Activated B cell treated with CpG ODN at 0.5 μM for 24 hours (primary cell): ENCODE measurements at regions of chr4 and their contacts with region 1.

Region 1: GRCh38 chr4:112636688-112637551 is at the starts of genes LARP7 and ZGRF1:
- DNase-seq: peak; percentile 91
- ATAC-seq: peak; percentile 89
- H3K4me3 Mint-ChIP-seq: no peak within 1 kb of the TSS
- H3K27ac Mint-ChIP-seq: no peak within 1 kb of the TSS
- H3K4me1 Mint-ChIP-seq: peaks cover 22% of the 10 kb centered on the region
- H3K27me3 Mint-ChIP-seq: no peaks in the 10 kb centered on the region
- CTCF ChIP-seq: peak; percentile 67
- total RNA-seq, gene LARP7: 56.9 and 57.8 TPM in 2 replicates
- total RNA-seq, gene ZGRF1: 12.3 and 13.7 TPM in 2 replicates

Region 2: DNA sequence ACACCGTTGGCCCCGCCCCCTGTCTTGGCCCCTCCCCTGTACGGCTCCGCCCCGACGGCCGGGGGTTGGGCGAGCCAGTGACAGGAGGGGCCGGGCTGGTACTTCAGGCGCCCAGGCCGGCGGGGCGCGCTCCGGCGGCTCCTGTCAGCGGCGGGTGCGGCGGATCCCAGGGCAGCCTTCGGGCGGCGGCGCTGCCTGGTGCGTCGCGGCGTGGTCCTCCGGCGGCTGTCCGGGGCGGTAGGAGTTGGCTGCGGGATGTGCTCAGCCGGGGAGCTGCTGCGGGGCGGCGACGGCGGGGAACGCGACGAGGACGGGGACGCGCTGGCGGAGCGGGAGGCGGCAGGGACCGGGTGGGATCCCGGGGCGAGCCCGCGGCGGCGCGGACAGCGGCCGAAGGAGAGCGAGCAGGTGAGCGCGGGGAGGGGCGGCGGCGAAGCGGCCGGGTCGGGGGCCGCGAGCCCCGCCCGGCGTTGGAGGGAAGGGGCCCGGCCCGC is 491.5 kb before region 1 on chr4 and contains the start of gene FAM241A:
- CTCF ChIA-PET with region 1: no interaction called
- POLR2A ChIA-PET with region 1: no interaction called
- intact Hi-C with region 1: loop called (anchors 1 kb)
- DNase-seq: peak; percentile 86
- ATAC-seq: peak; percentile 97
- H3K4me3 Mint-ChIP-seq: peak within 1 kb of the TSS; percentile 97
- H3K27ac Mint-ChIP-seq: peak within 1 kb of the TSS; percentile 80
- H3K4me1 Mint-ChIP-seq: peaks cover 19% of the 10 kb centered on the region
- H3K27me3 Mint-ChIP-seq: peaks cover 5% of the 10 kb centered on the region
- CTCF ChIP-seq: no peak
- total RNA-seq, gene FAM241A: 1.1 and 1.5 TPM in 2 replicates

Region 3: DNA sequence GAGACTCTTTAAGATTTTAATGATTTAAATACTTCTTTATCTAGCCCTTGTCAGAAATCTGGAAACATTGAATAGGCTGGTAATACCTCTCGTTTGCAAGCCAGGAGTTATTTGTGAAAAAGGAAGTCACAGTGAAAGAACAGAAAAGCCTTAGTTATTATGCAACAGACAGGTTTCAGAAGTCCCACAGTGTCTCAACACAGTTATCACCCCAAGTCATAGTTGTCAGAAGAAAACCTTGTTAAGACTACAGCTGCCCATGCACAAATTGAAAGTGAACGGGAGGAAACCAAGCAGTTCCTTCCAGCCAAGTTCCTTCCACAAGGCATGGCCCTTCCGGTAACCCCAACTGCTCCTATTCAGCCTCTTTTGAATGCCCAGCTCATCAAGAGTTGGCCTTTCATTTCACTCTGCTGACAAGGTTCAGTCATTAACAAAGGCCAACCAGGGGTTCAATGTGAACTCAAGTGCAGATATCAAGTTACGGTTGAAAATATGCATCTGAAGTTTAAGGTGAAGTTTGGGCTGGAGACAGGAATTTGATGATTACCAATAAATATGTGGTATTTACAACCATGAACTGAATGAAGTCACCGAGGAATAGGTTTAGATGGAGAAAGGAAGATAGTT is 324.2 kb before region 1 on chr4:
- CTCF ChIA-PET with region 1: no interaction called
- POLR2A ChIA-PET with region 1: no interaction called
- intact Hi-C with region 1: loop called (anchors 1 kb)
- DNase-seq: no peak
- ATAC-seq: peak; percentile 87
- H3K4me3 Mint-ChIP-seq: no peak overlapping the region
- H3K27ac Mint-ChIP-seq: no peak overlapping the region
- H3K4me1 Mint-ChIP-seq: peaks cover 19% of the 10 kb centered on the region
- H3K27me3 Mint-ChIP-seq: no peaks in the 10 kb centered on the region
- CTCF ChIP-seq: no peak

Region 4: GRCh38 chr4:112735474-112735951 is 98.6 kb after region 1 on chr4:
- CTCF ChIA-PET with region 1: no interaction called
- POLR2A ChIA-PET with region 1: no interaction called
- intact Hi-C with region 1: loop called (anchors 1 kb)
- DNase-seq: no peak
- ATAC-seq: peak; percentile 67
- H3K4me3 Mint-ChIP-seq: no peak overlapping the region
- H3K27ac Mint-ChIP-seq: peak overlapping the region; percentile 21
- H3K4me1 Mint-ChIP-seq: peaks cover 15% of the 10 kb centered on the region
- H3K27me3 Mint-ChIP-seq: no peaks in the 10 kb centered on the region
- CTCF ChIP-seq: no peak

Region 5: GRCh38 chr4:112817933-112818593 is 181.1 kb after region 1 on chr4:
- CTCF ChIA-PET with region 1: no interaction called
- POLR2A ChIA-PET with region 1: no interaction called
- intact Hi-C with region 1: loop called (anchors 2 kb)
- DNase-seq: peak; percentile 30
- ATAC-seq: peak; percentile 94
- H3K4me3 Mint-ChIP-seq: peak overlapping the region; percentile 88
- H3K27ac Mint-ChIP-seq: peak overlapping the region; percentile 83
- H3K4me1 Mint-ChIP-seq: peaks cover 15% of the 10 kb centered on the region
- H3K27me3 Mint-ChIP-seq: peaks cover 9% of the 10 kb centered on the region
- CTCF ChIP-seq: no peak

Region 6: DNA sequence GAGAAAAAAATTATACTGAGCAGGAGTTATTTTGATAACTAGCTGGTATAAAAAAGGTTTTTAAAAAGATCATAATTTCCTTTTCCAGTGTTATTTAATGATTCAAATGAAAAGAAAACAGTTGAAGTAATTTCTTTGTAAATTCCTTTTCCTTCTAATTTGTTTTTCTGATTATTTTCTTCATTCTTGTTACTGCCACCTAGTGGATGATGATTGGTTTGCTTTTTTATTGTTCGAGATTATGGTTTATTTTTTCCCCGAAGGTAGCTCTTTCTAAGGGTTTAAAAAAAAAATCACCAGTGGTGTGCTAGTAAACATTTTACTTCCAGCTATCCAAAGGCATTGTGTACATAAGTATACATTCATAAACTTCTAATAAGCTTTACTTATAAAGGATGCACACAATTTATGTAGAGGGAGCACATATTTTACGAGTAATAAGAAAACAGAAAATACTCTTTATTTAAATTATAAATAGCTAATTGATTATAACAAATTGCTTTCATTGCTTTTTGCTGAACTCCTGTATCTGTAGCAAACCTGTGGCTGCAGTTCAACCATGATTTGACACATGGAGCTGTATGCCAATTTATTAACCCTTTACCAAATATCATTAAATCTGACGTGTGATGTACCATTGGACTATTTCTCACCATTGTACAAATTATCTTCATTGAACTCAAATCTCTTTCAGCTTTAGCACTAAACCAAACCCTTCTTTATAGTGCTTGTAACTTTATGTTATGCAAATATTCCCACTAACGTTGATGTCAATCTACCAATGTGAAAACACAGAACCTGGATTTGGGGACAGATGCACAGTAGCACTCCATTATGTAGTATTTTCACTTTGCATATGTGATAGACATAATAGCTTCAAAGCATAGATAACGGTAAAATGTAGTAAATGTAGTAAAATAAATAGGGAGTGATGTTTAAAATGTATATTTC is 314.7 kb after region 1 on chr4:
- CTCF ChIA-PET with region 1: no interaction called
- POLR2A ChIA-PET with region 1: no interaction called
- intact Hi-C with region 1: loop called (anchors 1 kb)
- DNase-seq: no peak
- ATAC-seq: no peak
- H3K4me3 Mint-ChIP-seq: no peak overlapping the region
- H3K27ac Mint-ChIP-seq: no peak overlapping the region
- H3K4me1 Mint-ChIP-seq: peaks cover 2% of the 10 kb centered on the region
- H3K27me3 Mint-ChIP-seq: peaks cover 3% of the 10 kb centered on the region
- CTCF ChIP-seq: no peak

Region 7: DNA sequence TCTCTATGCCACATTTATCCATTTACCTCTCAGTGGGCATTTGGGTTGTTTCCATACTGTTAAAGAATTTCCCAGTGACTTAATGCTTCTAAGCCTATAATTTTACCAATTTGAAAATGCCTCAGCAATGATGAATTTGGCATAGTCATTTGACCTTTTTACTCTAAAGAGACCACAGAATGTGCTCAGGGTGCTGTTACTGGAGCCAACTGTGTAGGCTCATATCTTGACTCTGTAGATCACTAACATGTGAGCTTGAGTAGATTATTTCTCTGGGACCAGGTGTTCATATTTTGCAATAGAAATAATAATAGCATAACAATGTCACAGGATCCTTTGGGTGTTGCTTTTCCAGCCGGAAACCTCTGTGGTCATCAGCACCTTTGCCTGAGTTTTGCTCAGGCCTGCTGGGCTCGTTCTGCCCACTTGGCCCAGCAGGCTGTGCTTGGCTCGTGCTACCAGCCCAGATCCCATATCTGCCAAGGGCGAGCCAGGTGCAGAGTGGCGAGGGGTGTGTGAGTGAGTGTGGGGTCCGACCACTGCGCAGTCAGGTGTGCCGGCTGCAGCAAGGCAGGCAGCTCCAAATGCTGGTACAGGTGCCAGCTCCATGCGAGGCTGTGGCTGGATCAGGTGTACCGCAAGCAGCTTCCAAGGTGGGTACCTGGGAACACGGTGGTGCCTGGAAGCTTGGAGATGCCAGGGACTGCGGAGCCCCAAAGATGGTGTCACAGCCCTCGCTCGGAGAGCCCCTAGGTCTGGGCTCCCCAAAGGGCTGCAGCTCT is 342.0 kb after region 1 on chr4:
- CTCF ChIA-PET with region 1: no interaction called
- POLR2A ChIA-PET with region 1: no interaction called
- intact Hi-C with region 1: no loop called
- DNase-seq: no peak
- ATAC-seq: no peak
- H3K4me3 Mint-ChIP-seq: no peak overlapping the region
- H3K27ac Mint-ChIP-seq: no peak overlapping the region
- H3K4me1 Mint-ChIP-seq: no peaks in the 10 kb centered on the region
- H3K27me3 Mint-ChIP-seq: no peaks in the 10 kb centered on the region
- CTCF ChIP-seq: no peak